Endothelial cell of umbilical vein (primary cell): ENCODE measurements at regions of chr17 and their contacts with region 1.

Region 1: GRCh38 chr17:31842183-31843069 is 16.6 kb downstream of the COPRS start:
- DNase-seq: peak; percentile 77
- H3K4me3 ChIP-seq: peak overlapping the region in 1 of 3 experiments; percentile 28
- H3K27ac ChIP-seq: no peak overlapping the region
- H3K4me1 ChIP-seq: peaks cover 16% of the 10 kb centered on the region
- H3K27me3 ChIP-seq: peaks cover 0 to 2% of the 10 kb centered on the region in 2 experiments
- CTCF ChIP-seq: peak; percentile 88 to 92
- POLR2A ChIP-seq: no peak

Region 2: GRCh38 chr17:31437720-31438420 is 404.6 kb before region 1 on chr17:
- CTCF ChIA-PET with region 1: interaction called, 36 read pairs
- POLR2A ChIA-PET with region 1: no interaction called
- dilution Hi-C with region 1: no loop called
- intact Hi-C with region 1: loop called (anchors 1 kb)
- DNase-seq: no peak
- H3K4me3 ChIP-seq: no peak overlapping the region
- H3K27ac ChIP-seq: no peak overlapping the region
- H3K4me1 ChIP-seq: no peaks in the 10 kb centered on the region
- H3K27me3 ChIP-seq: no peaks in the 10 kb centered on the region
- CTCF ChIP-seq: no peak
- POLR2A ChIP-seq: no peak

Region 3: DNA sequence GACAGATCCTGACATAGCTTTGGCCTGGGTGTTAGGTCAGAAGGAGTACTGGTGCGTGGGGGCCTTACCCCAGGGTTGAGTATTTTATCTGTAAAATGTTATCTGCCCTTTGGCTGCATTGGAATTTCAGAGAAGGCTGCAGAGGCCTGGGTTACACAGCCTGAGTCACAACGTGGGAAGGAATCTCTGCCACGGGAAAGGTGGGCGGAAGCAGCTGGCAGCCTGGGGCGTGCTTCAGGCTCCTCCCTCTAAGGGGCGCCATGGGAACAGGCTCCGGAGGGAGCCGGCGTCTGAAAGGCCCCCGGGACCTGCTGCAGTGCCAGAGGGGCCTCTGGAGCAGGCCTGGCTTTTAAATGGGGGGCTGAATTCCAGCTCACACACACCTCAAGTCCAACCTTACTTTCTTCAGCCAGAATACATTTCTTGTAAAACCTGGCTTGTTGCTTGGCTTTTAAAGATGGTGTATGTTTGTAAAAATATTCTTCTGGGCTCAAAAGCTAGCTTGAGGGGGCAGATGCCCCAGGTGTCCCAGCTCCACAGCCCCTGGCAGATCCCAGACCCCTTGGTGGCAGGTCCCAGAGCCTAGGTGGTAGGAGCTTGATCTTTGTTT is 308.8 kb before region 1 on chr17:
- CTCF ChIA-PET with region 1: interaction called, 48 read pairs
- POLR2A ChIA-PET with region 1: no interaction called
- dilution Hi-C with region 1: no loop called
- intact Hi-C with region 1: loop called (anchors 2 kb)
- DNase-seq: peak; percentile 44
- H3K4me3 ChIP-seq: no peak overlapping the region
- H3K27ac ChIP-seq: no peak overlapping the region
- H3K4me1 ChIP-seq: no peaks in the 10 kb centered on the region
- H3K27me3 ChIP-seq: no peaks in the 10 kb centered on the region
- CTCF ChIP-seq: peak; percentile 20 to 36
- POLR2A ChIP-seq: no peak

Region 4: DNA sequence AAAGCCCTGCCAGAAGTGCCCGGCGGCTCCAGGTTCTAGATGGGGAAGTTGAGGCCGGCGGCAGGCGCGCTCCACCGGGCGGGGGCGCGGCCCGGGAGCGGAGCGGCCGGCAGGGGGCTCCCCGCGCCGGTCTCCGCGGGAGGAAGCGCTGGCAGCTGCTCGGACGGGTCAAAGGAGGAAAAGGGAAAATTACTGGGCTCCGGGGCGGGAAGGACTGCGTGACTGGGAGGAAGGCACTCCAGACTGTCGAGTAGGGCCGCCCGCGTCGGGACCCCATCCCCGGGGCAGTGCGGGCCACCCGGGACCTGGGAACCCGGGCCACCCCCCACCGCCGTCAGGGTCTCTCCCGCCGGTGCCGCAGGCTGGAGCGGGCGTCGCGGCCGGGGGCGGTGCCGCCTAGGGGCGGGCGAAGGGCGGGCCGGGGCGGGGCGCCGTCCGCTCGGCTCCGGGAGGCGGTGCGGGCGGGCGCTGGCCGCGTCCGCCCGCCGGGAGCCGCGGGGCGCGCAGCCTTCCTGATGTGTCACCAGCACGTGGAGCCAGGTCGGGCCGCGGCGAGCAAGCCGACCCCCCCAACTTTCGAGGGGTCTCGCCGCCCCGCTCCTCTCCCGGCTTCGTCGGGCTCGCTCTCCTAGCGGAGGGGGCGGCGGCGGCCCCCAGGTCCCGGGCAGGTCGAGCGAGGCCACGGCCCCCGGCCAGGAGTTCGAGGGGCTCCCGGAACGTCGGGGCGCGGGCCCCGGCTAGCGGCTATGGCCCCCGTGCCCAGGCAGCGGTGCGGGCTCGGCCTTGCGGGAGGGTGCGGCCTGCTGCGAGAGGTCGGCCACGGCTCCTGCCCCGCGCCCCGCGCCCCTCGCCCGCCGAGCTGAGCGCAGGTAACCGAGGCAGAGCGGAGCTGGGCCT is 283.4 kb before region 1 on chr17:
- CTCF ChIA-PET with region 1: interaction called, 187 read pairs
- POLR2A ChIA-PET with region 1: interaction called, 3 read pairs
- dilution Hi-C with region 1: no loop called
- intact Hi-C with region 1: loop called (anchors 1 kb)
- DNase-seq: peak; percentile 81
- H3K4me3 ChIP-seq: peak overlapping the region; percentile 43 to 89 (median 51)
- H3K27ac ChIP-seq: peak overlapping the region; percentile 91
- H3K4me1 ChIP-seq: peaks cover 21% of the 10 kb centered on the region
- H3K27me3 ChIP-seq: peaks cover 0 to 2% of the 10 kb centered on the region in 2 experiments
- CTCF ChIP-seq: peak; percentile 65 to 94
- POLR2A ChIP-seq: peak; percentile 82

Region 5: DNA sequence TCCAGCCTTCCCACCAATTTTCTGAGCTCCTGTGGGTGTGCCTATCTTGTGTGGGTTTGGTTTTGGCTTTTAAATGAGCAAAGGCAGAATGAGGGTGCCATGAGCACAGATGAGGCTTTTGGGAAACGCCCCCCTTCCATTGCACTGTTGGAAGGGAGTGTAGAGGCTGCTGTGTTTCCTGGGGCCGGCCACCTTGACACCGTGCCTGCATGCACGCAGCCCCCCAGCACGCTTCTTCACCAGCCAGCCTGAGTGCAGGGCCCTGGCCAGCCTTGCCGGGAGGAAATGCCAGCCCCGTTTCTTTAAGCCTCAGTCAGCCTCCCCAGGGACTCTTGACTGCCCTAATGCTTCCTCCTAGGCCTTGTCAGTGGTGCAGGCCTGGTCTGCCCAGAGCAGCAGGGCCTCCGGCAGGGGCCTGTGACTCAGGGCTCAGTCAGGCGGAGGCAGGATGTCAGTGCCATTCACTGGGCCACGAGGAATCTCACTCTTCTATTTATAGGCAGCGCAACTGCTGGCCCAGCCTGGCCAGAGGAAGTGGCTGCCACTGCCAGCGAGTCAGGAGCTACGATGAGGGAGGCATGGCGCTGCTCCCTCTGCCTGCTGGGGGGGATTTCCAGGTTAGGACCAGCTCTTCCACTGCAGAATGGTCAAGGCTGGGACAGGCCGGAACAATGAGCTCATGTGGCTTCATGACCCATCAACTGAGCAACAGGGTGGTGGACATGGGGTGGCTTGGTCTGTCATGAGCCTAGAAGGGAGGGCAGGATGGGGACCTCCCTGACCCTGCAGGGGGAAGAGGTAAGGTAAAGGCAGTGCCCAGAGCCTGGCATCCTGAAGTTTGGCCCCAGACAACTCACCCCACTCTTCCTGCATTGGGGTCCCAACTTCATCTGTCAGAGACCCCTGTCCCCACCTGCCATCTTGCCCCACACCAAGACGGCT is 245.8 kb before region 1 on chr17:
- CTCF ChIA-PET with region 1: interaction called, 15 read pairs
- POLR2A ChIA-PET with region 1: no interaction called
- dilution Hi-C with region 1: no loop called
- intact Hi-C with region 1: no loop called
- DNase-seq: peak; percentile 96
- H3K4me3 ChIP-seq: no peak overlapping the region
- H3K27ac ChIP-seq: peak overlapping the region; percentile 79
- H3K4me1 ChIP-seq: peaks cover 18% of the 10 kb centered on the region
- H3K27me3 ChIP-seq: no peaks in the 10 kb centered on the region
- CTCF ChIP-seq: no peak
- POLR2A ChIP-seq: peak; percentile 14

Region 6: GRCh38 chr17:31900877-31901276 is 58.5 kb after region 1 on chr17:
- CTCF ChIA-PET with region 1: interaction called, 12 read pairs
- POLR2A ChIA-PET with region 1: no interaction called
- dilution Hi-C with region 1: no loop called
- intact Hi-C with region 1: no loop called
- DNase-seq: no peak
- H3K4me3 ChIP-seq: peak overlapping the region; percentile 71 to 92 (median 71)
- H3K27ac ChIP-seq: no peak overlapping the region
- H3K4me1 ChIP-seq: peaks cover 5% of the 10 kb centered on the region
- H3K27me3 ChIP-seq: no peaks in the 10 kb centered on the region
- CTCF ChIP-seq: no peak
- POLR2A ChIP-seq: no peak

Region 7: GRCh38 chr17:31919802-31920525 is 77.5 kb after region 1 on chr17:
- CTCF ChIA-PET with region 1: no interaction called
- POLR2A ChIA-PET with region 1: no interaction called
- dilution Hi-C with region 1: no loop called
- intact Hi-C with region 1: no loop called
- DNase-seq: no peak
- H3K4me3 ChIP-seq: no peak overlapping the region
- H3K27ac ChIP-seq: no peak overlapping the region
- H3K4me1 ChIP-seq: peaks cover 4% of the 10 kb centered on the region
- H3K27me3 ChIP-seq: no peaks in the 10 kb centered on the region
- CTCF ChIP-seq: no peak
- POLR2A ChIP-seq: no peak

Region 8: GRCh38 chr17:32298298-32298697 is 455.9 kb after region 1 on chr17:
- CTCF ChIA-PET with region 1: no interaction called
- POLR2A ChIA-PET with region 1: no interaction called
- dilution Hi-C with region 1: no loop called
- intact Hi-C with region 1: no loop called
- DNase-seq: no peak
- H3K4me3 ChIP-seq: no peak overlapping the region
- H3K27ac ChIP-seq: no peak overlapping the region
- H3K4me1 ChIP-seq: no peaks in the 10 kb centered on the region
- H3K27me3 ChIP-seq: peaks cover 0 to 2% of the 10 kb centered on the region in 2 experiments
- CTCF ChIP-seq: no peak
- POLR2A ChIP-seq: no peak